GM12878 (cell line): ENCODE measurements at regions of chr10 and their contacts with region 1.

Region 1: DNA sequence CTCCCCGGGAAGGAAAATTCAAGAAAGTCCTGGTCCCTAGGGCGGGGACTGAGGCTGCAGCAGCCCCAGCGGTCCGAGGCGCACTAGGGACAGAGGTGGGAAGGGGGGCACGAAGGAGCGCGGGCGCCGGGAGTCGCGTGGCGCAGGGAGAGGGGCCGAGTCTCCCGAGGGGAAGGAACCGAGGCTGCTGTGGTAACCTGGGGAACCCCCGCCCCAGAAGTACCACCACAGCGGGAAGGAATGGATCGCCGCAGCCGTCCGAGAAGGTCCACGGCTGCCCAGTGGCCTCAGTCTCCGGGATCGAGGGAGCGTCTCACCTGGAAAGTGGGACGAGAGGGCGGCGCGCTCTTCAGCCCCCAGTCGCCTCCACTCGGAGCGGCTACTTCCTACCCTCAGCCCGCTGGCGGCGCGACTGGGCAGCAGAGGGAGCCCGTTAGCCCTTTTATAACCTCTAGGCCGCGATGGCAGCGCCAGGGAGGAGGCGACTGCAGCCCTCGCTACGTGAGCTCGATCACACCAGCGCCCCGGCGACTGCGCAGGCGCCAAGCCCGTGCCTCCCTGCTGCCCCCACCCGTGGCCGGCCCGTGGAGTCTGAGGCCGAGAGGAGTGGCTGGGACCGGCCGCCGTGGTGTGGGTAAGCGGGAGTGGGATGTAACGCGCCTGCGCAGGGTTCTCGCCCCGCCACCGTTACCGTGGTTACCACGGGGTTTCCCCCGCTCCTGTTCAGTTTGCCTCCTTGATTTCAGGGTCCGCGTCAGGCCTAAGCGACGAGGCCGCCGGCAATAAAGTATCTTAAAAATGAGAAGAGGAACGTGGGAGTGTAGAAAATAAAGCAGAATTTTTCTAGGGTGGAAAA is at the start of gene P4HA1:
- DNase-seq: peak; percentile 96
- ATAC-seq: peak; percentile 94
- H3K4me3 ChIP-seq: peak within 1 kb of the TSS; percentile 95
- H3K27ac ChIP-seq: peak within 1 kb of the TSS; percentile 89
- H3K4me1 ChIP-seq: peaks cover 6% of the 10 kb centered on the region; the same call in 1 of the 2 replicates
- H3K27me3 ChIP-seq: no peaks in the 10 kb centered on the region
- CTCF ChIP-seq: peak; percentile 70 to 87 (median 70)
- EP300 ChIP-seq: peak in 1 of 2 experiments; percentile 41; a peak in 1 of 4 replicates
- POLR2A ChIP-seq: peak; percentile 99
- RAD21 ChIP-seq: peak; percentile 72
- polyA plus RNA-seq, gene P4HA1: 15.0 to 17.6 TPM

Region 2: DNA sequence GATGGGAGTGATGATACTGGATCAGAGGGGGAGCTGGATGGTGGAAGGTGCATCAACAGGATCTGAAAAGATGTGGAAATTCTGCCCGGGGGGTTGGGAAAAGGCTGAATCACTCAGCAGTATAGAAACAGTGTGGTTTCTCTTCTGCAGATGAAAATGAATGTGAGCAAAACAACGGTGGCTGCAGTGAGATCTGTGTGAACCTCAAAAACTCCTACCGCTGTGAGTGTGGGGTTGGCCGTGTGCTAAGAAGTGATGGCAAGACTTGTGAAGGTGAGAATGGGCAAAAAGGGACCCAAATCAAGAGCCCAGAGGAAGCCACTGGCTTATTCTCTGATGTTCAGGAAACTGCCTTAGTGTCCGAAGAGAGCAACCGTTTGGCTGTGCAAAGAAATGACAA is 190.2 kb before region 1 on chr10:
- CTCF ChIA-PET with region 1: no interaction called
- POLR2A ChIA-PET with region 1: no interaction called
- RAD21 ChIA-PET with region 1: no interaction called
- SMC1A ChIA-PET with region 1: no interaction called
- in situ Hi-C with region 1: no loop called
- intact Hi-C with region 1: no loop called
- DNase-seq: no peak
- ATAC-seq: no peak
- H3K4me3 ChIP-seq: no peak overlapping the region
- H3K27ac ChIP-seq: no peak overlapping the region
- H3K4me1 ChIP-seq: no peaks in the 10 kb centered on the region
- H3K27me3 ChIP-seq: no peaks in the 10 kb centered on the region
- CTCF ChIP-seq: no peak
- EP300 ChIP-seq: no peak
- POLR2A ChIP-seq: no peak
- RAD21 ChIP-seq: no peak

Region 3: GRCh38 chr10:73076360-73077183 is 20.1 kb before region 1 on chr10:
- CTCF ChIA-PET with region 1: interaction called, 55 read pairs
- POLR2A ChIA-PET with region 1: interaction called, 47 read pairs
- RAD21 ChIA-PET with region 1: interaction called, 90 read pairs
- SMC1A ChIA-PET with region 1: interaction called, 114 read pairs
- in situ Hi-C with region 1: no loop called
- intact Hi-C with region 1: no loop called
- DNase-seq: no peak
- ATAC-seq: peak; percentile 61
- H3K4me3 ChIP-seq: 0 out of 2 replicates have a peak overlapping the region, but pooled peaks have one; percentile 9
- H3K27ac ChIP-seq: peak overlapping the region; percentile 60
- H3K4me1 ChIP-seq: peaks cover 9% of the 10 kb centered on the region; the same call in 1 of the 2 replicates
- H3K27me3 ChIP-seq: no peaks in the 10 kb centered on the region
- CTCF ChIP-seq: no peak
- EP300 ChIP-seq: no peak
- POLR2A ChIP-seq: no peak
- RAD21 ChIP-seq: no peak

Region 4: GRCh38 chr10:73110345-73110849 is 13.7 kb after region 1 on chr10 and contains the start of gene NUDT13:
- CTCF ChIA-PET with region 1: interaction called, 26 read pairs
- POLR2A ChIA-PET with region 1: interaction called, 49 read pairs
- RAD21 ChIA-PET with region 1: interaction called, 47 read pairs
- SMC1A ChIA-PET with region 1: interaction called, 41 read pairs
- in situ Hi-C with region 1: no loop called
- intact Hi-C with region 1: no loop called
- DNase-seq: peak; percentile 83
- ATAC-seq: peak; percentile 95
- H3K4me3 ChIP-seq: peak within 1 kb of the TSS; percentile 79
- H3K27ac ChIP-seq: peak within 1 kb of the TSS; percentile 90
- H3K4me1 ChIP-seq: no peaks in the 10 kb centered on the region
- H3K27me3 ChIP-seq: no peaks in the 10 kb centered on the region
- CTCF ChIP-seq: no peak
- EP300 ChIP-seq: no peak
- POLR2A ChIP-seq: no peak
- RAD21 ChIP-seq: no peak
- polyA plus RNA-seq, gene NUDT13: 1.5 to 2.6 TPM

Region 5: GRCh38 chr10:73136627-73137026 is 40.0 kb after region 1 on chr10:
- CTCF ChIA-PET with region 1: interaction called, 9 read pairs
- POLR2A ChIA-PET with region 1: interaction called, 9 read pairs
- RAD21 ChIA-PET with region 1: interaction called, 9 read pairs
- SMC1A ChIA-PET with region 1: interaction called, 11 read pairs
- in situ Hi-C with region 1: no loop called
- intact Hi-C with region 1: no loop called
- DNase-seq: no peak
- ATAC-seq: no peak
- H3K4me3 ChIP-seq: no peak overlapping the region
- H3K27ac ChIP-seq: no peak overlapping the region
- H3K4me1 ChIP-seq: peaks cover 4% of the 10 kb centered on the region; the same call in 1 of the 2 replicates
- H3K27me3 ChIP-seq: no peaks in the 10 kb centered on the region
- CTCF ChIP-seq: no peak
- EP300 ChIP-seq: no peak
- POLR2A ChIP-seq: no peak
- RAD21 ChIP-seq: no peak

Region 6: GRCh38 chr10:73167783-73168464 is 71.2 kb after region 1 on chr10 and contains the starts of genes ECD and FAM149B1:
- CTCF ChIA-PET with region 1: interaction called, 29 read pairs
- POLR2A ChIA-PET with region 1: interaction called, 33 read pairs
- RAD21 ChIA-PET with region 1: interaction called, 10 read pairs
- SMC1A ChIA-PET with region 1: interaction called, 28 read pairs
- in situ Hi-C with region 1: loop called (anchors 5 kb)
- intact Hi-C with region 1: no loop called
- DNase-seq: peak; percentile 79
- ATAC-seq: peak; percentile 95
- H3K4me3 ChIP-seq: peak within 1 kb of the TSS; percentile 96
- H3K27ac ChIP-seq: peak within 1 kb of the TSS; percentile 84
- H3K4me1 ChIP-seq: no peaks in the 10 kb centered on the region
- H3K27me3 ChIP-seq: no peaks in the 10 kb centered on the region
- CTCF ChIP-seq: peak in 2 of 3 experiments; percentile 27 to 30; a peak in 3 of 6 replicates
- EP300 ChIP-seq: peak in 1 of 2 experiments; percentile 37; a peak in 1 of 4 replicates
- POLR2A ChIP-seq: peak; percentile 96
- RAD21 ChIP-seq: no peak
- polyA plus RNA-seq, gene ECD: 27.3 to 29.9 TPM
- polyA plus RNA-seq, gene FAM149B1: 6.6 to 11.6 TPM

Region 7: DNA sequence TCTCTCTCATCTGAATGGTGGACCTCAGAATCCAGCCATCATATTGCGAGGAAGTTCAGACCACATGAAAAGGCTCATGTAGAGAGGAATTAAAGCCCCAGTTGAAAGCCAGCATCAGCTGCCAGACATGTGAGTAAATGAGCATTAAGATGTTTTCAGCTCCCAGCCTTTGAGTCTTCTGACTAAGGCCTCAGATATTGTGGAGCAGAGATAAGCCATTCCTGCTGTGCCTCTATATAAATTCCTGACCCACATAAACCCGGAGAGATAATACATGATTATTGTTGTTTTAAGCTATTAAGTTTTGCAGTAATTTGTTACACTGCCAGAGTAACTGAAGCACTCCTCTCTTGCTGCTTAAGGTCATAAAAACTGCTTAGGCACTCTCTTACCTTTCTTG is 85.9 kb after region 1 on chr10:
- CTCF ChIA-PET with region 1: no interaction called
- POLR2A ChIA-PET with region 1: no interaction called
- RAD21 ChIA-PET with region 1: no interaction called
- SMC1A ChIA-PET with region 1: no interaction called
- in situ Hi-C with region 1: no loop called
- intact Hi-C with region 1: no loop called
- DNase-seq: no peak
- ATAC-seq: no peak
- H3K4me3 ChIP-seq: no peak overlapping the region
- H3K27ac ChIP-seq: no peak overlapping the region
- H3K4me1 ChIP-seq: no peaks in the 10 kb centered on the region
- H3K27me3 ChIP-seq: no peaks in the 10 kb centered on the region
- CTCF ChIP-seq: no peak
- EP300 ChIP-seq: no peak
- POLR2A ChIP-seq: no peak
- RAD21 ChIP-seq: no peak